ENCODE measurements at regions of chr3 and their contacts with region 1.

Region 1: DNA sequence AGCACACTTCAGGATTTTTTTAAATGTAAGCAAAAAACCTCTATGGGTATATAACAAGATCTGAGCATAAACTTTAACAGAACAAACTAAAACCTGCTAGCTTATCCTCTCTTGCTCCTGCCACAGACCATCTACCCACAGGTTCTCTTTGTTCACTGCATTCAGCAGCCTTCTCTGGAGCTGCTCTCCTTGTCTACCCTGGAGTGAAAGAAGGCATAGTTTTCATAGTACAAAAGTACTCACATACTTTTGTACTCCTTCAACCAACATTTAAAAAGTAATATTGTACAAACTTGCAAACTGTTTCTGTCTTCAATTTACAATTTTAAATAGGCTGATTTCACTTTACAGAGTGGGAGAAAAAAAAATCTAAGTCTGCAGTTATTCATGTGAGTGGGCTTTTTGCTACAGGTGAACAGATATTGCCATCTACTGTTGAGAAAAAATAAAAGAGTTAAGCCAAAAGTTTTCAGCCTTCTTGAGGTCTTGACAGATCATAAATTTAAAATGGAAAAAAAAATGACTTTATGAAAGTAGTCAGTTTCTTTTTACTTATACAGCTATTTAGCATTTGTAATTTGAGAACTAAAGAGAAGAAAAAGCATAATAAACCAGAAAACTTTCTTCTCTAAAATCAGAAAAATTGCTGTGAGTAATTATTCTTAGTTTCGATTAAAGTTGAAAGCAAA is 20.4 kb downstream of the TERC start:
- DNase-seq: no peak
- H3K4me3 ChIP-seq: no peak overlapping the region
- H3K27ac ChIP-seq: no peak overlapping the region
- H3K4me1 ChIP-seq: no peaks in the 10 kb centered on the region
- H3K27me3 ChIP-seq: no peaks in the 10 kb centered on the region
- CTCF ChIP-seq: peak in 4 of 6 experiments; percentile 11 to 73 (median 58)
- POLR2A ChIP-seq: no peak

Region 2: GRCh38 chr3:169676925-169677537 is 67.5 kb before region 1 on chr3:
- intact Hi-C with region 1: loop called (anchors 10 kb)
- DNase-seq: no peak
- H3K4me3 ChIP-seq: no peak overlapping the region
- H3K27ac ChIP-seq: no peak overlapping the region
- H3K4me1 ChIP-seq: no peaks in the 10 kb centered on the region
- H3K27me3 ChIP-seq: no peaks in the 10 kb centered on the region
- CTCF ChIP-seq: no peak
- POLR2A ChIP-seq: no peak